A673 (cell line): ENCODE measurements at regions of chrX and their contacts with region 1.

Region 1: DNA sequence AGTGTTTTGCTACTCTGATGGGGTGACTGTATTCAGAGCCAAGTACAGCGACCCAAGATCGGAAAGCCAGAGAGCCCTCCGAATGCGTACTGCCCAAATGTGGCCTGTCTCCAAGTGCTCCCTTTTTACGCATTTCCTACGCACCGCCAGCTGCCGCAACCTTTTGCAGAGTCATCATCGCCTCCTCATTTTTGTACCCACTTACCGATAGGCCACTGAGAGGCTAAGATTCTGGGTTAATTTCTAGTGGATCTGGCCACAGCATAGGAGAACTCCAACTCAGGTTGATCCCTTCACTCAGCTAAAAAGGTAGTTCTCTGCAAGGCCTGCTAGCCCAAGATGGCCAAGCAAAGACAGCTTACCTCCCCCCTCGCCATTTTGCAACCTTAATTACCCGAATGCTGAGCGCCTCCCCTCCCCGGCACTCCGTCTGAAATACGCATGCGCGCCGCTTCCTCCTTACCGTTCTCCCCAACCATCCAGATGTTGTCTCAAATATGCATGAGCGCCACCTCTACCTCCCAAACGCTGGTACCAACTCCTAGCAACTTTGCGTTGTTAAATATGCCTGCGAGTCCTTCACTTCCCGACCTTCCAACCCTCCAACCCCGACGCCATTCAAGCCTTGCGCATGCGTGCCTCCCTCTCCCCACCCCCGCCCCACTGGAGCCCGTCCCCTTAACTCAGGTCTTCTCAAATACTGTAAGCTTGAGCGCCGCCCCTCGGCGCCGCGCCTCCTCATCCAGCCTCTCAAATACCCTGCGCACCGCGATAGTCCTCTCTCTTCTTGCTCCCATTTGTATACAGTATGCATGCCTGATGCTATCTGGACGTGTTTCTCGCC is 11.8 kb upstream of the ZCCHC13 start:
- DNase-seq: peak; percentile 93
- H3K4me3 ChIP-seq: peak overlapping the region; percentile 67
- H3K27ac ChIP-seq: peak overlapping the region; percentile 90
- H3K4me1 ChIP-seq: no peaks in the 10 kb centered on the region
- H3K27me3 ChIP-seq: no peaks in the 10 kb centered on the region
- CTCF ChIP-seq: peak; percentile 46; the same call in 1 of the 2 replicates

Region 2: DNA sequence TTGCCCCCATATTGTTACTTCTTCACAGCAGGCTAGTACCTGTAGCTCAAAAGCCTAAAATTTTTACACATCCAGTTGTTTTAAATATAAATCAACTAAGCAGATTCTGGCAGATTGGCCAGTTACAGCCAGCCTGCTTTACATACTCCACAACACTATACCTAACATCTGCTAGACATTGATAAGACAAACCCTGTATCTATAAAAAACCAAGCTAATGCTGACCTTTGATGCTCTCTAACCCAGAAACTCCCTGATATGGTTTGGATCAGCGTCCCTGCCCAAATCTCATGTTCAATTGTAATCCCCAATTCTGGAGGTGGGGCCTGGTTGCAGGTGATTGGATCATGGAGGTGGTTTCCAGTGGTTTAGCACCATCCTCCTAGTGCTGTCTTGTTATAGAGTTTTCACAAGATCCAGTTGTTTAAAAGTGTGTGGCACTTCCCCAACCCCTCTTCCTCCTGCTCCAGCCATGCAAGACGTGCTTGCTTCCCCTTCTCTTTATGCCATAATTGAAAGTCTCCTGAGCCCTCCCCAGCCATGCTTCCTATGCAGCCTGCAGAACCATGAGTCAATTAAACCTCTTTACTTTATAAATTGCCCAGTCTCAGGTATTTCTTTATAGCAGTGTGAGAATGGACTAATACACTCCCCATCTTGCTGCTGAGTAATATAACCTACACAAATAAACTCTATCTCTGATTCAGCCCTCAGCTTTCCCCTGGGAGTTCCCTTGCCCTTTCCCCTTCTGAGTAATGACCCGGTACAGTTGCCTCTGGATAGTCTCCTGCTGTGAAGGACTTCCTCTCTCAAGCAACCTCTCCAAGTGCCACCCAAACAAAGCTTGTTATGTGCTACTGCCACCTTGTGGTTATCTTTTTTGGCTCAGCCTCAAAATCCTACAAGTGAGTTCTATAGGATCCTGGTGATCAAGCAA is 51.4 kb after region 1 on chrX:
- CTCF ChIA-PET with region 1: no interaction called
- POLR2A ChIA-PET with region 1: no interaction called
- intact Hi-C with region 1: loop called (anchors 5 kb)
- DNase-seq: peak; percentile 94
- H3K4me3 ChIP-seq: no peak overlapping the region
- H3K27ac ChIP-seq: no peak overlapping the region
- H3K4me1 ChIP-seq: peaks cover 4% of the 10 kb centered on the region
- H3K27me3 ChIP-seq: no peaks in the 10 kb centered on the region
- CTCF ChIP-seq: peak; percentile 73